ENCODE measurements at regions of chr13 and their contacts with region 1.

Region 1: DNA sequence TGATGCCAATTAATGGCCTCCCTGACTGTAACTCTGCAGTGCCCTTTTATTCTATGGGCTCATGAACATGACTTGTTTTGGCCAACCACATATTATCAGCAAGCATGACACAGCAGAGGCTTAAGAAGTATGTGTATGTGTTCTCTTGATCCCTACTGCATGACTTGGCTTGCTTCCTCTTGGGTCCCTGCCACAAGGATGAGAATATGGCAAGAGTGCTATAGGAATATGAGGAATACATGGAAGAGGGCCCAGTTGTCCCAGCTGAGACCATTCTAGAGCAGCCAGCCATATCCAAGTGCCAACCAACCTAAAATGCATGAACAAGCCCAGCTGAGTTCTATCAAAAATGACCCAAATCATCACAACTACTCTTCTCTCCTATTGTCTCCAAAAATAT is 576.7 kb upstream of the PCDH9 start:
- DNase-seq: no peak
- ATAC-seq: no peak
- H3K4me3 ChIP-seq: no peak overlapping the region
- H3K27ac ChIP-seq: no peak overlapping the region
- H3K4me1 ChIP-seq: no peaks in the 10 kb centered on the region
- H3K27me3 ChIP-seq: no peaks in the 10 kb centered on the region
- CTCF ChIP-seq: no peak

Region 2: DNA sequence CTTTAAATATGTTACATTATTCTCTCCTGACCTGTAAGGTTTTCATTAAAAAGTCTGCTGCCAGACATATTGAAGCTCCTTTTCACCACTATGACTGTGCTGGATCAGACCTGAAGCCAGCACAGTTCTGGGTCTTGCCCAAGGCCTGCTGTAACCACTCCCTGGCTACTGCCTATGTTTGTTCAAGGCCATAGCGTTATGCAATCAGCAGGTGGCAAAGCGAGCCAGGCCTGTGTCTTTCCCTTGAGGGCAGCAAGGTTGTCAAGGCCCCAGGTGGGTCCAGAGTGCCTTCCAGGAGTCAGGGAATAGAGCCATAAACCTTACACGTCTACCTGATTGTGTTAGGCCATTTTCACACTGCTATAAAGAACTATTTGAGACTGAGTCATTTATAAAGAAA is 79.8 kb before region 1 on chr13:
- CTCF ChIA-PET with region 1: interaction called, 10 read pairs
- POLR2A ChIA-PET with region 1: no interaction called
- intact Hi-C with region 1: no loop called
- DNase-seq: no peak
- ATAC-seq: no peak
- H3K4me3 ChIP-seq: no peak overlapping the region
- H3K27ac ChIP-seq: no peak overlapping the region
- H3K4me1 ChIP-seq: no peaks in the 10 kb centered on the region
- H3K27me3 ChIP-seq: no peaks in the 10 kb centered on the region
- CTCF ChIP-seq: no peak